ENCODE measurements at regions of chr11 and their contacts with region 1.

Region 1: GRCh38 chr11:31303644-31304180 is 65.8 kb downstream of the DCDC1 start:
- DNase-seq: no peak
- ATAC-seq: no peak
- H3K4me3 ChIP-seq: no peak overlapping the region
- H3K27ac ChIP-seq: no peak overlapping the region
- H3K4me1 ChIP-seq: no peaks in the 10 kb centered on the region
- H3K27me3 ChIP-seq: peaks cover 3% of the 10 kb centered on the region; the same call in 1 of the 2 replicates
- CTCF ChIP-seq: no peak

Region 2: DNA sequence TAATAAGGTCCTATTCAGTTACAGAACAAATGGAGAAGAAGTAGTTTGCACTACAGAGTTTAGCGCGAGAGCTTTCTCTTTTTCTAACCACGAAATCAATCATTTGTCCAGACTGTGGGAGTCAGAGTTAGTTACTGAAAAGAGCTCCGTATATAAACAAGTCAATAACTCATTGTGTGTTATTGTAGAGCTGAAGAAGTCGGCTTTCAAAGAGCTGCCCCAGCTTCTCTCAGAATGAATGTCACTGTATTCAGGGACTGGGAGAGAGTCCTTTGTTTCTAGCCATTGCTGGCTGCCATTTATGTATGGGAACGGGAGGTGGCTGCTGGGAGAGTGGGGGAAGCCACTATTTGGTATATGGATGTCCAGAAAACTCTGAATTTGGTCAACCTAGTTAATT is 161.9 kb before region 1 on chr11:
- CTCF ChIA-PET with region 1: interaction called, 13 read pairs
- POLR2A ChIA-PET with region 1: no interaction called
- in situ Hi-C with region 1: no loop called
- intact Hi-C with region 1: no loop called
- DNase-seq: no peak
- ATAC-seq: no peak
- H3K4me3 ChIP-seq: no peak overlapping the region
- H3K27ac ChIP-seq: no peak overlapping the region
- H3K4me1 ChIP-seq: no peaks in the 10 kb centered on the region
- H3K27me3 ChIP-seq: no peaks in the 10 kb centered on the region
- CTCF ChIP-seq: no peak

Measured in Panc1 (cell line).